Sciatic nerve (tissue), 2 donors: ENCODE measurements at regions of chrX and their contacts with region 1.

Region 1: GRCh38 chrX:107669885-107670628 is 41.7 kb downstream of the PRPS1 start:
- DNase-seq: no peak
- ATAC-seq: no peak

Region 2: DNA sequence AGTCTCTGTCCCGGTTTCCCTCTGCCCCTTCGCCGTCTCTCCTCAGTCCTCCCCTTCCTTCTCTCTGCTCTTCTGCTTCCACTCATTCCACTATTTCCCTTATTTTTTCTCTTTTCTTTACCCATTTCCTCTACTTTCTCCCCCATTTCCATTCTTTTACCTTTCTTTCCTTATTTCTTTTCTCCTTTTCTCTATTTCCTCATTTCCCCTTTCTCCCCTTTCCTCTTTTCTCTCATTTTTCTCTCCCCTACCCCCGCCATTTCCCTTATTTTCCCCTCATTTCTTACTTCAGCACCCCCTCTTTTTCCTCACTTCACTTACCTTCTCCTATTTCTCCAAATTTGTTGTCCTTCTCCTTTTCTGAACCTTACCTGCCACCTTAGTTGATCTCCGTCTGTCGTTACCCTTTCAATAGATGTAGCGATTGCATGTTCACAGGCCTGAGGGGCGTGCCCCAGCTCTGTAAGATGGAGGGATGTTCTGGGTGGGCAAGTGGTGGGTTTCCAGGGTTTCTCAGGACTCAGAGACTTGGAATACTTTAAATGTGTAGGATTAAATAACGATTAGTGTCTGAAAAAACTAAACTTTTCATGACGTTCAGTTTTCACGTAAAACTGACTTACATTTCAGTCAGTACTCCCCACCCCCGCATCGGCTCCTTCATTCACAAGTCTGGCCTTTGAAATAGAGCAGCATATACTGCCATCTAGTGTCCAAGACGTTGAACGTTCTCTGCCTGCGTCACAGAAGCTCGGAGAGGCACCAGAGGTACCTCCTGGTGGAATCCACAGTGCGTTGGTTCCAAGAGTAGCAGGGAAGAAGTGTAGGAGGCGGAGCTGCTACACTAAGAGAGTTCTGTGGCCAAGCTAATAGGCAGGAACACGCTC is 106.8 kb after region 1 on chrX:
- intact Hi-C with region 1: loop called (anchors 5 kb)
- DNase-seq: peak; percentile 86
- ATAC-seq: peak; percentile 85